ENCODE measurements at regions of chr14 and their contacts with region 1.

Region 1: GRCh38 chr14:21092273-21093011 is 6.0 kb downstream of the ZNF219 start:
- DNase-seq: no peak
- H3K4me3 ChIP-seq: no peak overlapping the region
- CTCF ChIP-seq: peak; percentile 100

Region 2: DNA sequence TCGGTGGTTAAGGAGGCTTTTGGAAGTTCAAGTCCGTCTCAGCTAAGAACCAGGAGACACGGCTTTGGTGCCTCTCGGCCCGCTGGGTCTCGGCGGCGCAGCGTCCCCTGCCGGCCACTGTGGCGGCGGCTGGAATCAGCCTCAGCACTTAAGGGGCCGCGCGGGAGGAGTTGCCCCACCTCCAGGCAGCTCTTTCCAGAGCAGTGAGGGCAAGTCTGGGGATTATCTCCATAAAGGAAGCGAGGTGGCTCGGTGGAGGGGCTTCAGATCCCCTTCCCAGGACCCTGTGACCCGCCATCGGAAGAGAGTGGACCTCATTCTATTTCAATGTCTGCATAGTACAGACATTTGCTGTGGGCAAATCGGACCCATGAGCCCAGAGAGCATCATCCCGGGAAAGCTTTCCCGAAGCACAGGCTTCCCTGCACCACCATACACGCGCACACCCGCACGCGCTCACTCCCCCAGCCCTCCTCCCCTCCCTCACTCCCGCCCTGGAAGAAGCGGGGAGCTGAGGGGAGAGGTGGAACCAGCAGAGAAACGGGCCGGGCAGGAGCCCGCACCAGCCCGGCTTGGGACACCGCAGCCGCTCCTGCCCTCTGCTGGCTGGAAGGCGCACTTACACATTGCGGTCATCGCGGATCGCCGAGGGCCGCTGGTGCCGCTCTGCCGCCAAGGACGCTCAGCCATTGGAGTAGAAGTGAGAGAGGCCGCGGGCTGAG is 121.3 kb before region 1 on chr14:
- CTCF ChIA-PET with region 1: interaction called, 14 read pairs
- POLR2A ChIA-PET with region 1: no interaction called
- DNase-seq: no peak
- H3K4me3 ChIP-seq: peak overlapping the region; percentile 73
- CTCF ChIP-seq: peak; percentile 98

Region 3: GRCh38 chr14:21003788-21004346 is 88.6 kb before region 1 on chr14:
- CTCF ChIA-PET with region 1: interaction called, 15 read pairs
- POLR2A ChIA-PET with region 1: no interaction called
- DNase-seq: no peak
- H3K4me3 ChIP-seq: no peak overlapping the region
- CTCF ChIP-seq: no peak

Region 4: DNA sequence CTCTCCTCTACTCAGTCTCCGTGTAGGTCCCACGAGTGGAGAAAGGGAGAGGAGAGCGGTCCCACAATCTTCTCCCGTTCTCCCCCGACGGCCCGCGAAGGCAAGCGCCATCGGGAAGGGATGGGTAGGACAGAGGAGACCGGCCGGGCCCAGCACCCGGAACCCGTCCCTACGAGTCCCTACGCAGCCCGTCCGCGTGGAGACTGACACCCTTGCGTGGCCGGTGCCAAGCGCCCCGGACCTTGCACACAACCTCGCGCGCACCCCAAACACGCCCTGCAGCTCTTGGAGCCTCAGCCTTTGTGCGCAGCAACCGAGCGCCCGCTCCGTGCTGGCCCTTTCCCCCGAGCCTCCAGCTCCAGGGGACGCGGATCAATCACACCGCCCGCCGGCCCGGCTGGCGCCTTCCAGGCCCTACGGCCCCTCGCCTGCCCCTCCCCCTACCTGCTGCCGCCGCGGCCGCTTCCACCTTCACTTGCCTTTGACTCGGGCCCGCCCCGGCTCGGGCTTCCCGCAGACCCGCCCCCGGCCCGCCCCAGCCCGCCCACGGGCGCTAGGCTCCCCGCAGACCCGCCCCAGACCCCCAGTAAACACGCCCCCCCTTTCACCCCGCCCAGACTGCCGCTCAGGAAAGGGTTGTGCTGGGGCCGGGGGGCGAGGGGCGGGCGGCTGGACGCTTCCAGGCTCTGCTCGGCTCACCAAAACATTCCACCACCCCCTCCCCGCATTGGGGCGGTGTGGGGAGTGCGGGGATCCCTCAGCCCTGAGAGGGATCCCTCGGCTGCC is 67.7 kb before region 1 on chr14 and contains the start of gene NDRG2:
- CTCF ChIA-PET with region 1: interaction called, 325 read pairs
- POLR2A ChIA-PET with region 1: no interaction called
- DNase-seq: no peak
- H3K4me3 ChIP-seq: peak within 1 kb of the TSS; percentile 43
- CTCF ChIP-seq: no peak

Region 5: DNA sequence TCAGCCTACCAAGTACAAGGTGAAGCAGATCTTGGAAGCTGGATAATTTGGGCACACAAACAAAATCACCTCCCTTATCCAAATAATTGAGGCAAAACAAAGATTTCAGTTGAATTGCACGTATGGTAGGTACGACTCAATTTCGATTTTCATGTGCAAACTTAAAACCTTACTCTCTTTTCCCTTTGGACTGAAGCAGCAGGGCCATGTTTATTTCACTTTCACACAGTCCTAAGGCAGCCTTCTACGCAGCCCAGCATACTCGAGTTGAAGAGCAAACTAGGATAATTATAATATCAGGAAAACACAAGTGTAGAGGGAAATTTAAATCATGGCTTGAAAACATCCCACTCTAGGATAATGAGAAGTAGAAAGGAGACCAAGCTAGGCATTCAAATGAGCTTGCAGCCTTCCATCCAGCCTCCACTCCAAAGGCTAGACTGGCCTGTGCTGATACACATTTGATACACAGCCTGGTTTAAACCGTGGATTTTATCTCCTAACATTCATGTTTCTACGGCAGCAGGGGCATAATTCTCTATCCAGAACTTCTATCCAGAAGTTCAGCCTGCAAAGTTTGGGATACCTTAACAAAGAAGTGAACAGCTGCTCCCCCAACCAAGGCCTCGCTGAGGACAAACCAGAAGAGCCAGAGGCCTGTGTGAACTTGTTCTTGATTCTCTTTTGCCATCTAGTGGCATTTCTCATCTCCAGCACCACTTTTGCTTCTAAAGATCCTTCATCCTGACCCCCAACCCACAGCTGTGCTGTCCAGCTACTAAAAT is 52.7 kb before region 1 on chr14:
- CTCF ChIA-PET with region 1: interaction called, 34 read pairs
- POLR2A ChIA-PET with region 1: interaction called, 3 read pairs
- DNase-seq: peak; percentile 29
- H3K4me3 ChIP-seq: no peak overlapping the region
- CTCF ChIP-seq: peak; percentile 56

Region 6: DNA sequence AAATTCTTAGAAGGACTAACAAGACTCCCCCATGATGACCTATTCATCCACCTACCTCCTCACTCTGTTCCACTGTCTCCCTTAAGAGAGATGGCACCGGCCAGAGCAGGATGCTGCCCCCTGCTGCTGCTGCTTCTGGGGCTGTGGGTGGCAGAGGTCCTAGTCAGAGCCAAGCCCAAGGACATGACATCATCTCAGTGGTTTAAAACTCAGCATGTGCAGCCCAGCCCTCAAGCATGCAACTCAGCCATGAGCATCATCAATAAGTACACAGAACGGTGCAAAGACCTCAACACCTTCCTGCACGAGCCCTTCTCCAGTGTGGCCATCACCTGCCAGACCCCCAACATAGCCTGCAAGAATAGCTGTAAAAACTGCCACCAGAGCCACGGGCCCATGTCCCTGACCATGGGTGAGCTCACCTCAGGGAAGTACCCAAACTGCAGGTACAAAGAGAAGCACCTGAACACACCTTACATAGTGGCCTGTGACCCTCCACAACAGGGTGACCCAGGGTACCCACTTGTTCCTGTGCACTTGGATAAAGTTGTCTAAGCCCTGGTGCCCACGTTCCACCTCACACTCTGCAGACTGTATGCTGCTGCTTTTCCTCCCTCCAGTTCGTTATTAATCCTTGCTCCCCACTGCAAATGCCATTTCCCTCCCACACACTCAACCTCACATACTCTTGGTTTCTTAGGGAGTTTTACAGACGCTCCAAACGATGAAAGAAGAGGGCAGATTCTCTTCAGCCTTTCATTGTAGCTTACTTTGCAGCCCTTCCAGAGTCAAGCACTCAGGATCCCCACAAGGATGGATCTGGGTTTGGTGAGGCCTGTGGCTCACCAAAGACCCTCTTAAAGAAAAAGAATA is 34.4 kb before region 1 on chr14 and contains the start of gene RNASE8:
- CTCF ChIA-PET with region 1: interaction called, 36 read pairs
- POLR2A ChIA-PET with region 1: no interaction called
- DNase-seq: no peak
- H3K4me3 ChIP-seq: no peak within 1 kb of the TSS
- CTCF ChIP-seq: peak; percentile 36

Region 7: GRCh38 chr14:21071225-21072030 is 21.0 kb before region 1 on chr14:
- CTCF ChIA-PET with region 1: interaction called, 220 read pairs
- POLR2A ChIA-PET with region 1: interaction called, 42 read pairs
- DNase-seq: no peak
- H3K4me3 ChIP-seq: peak overlapping the region; percentile 81
- CTCF ChIP-seq: no peak

Region 8: DNA sequence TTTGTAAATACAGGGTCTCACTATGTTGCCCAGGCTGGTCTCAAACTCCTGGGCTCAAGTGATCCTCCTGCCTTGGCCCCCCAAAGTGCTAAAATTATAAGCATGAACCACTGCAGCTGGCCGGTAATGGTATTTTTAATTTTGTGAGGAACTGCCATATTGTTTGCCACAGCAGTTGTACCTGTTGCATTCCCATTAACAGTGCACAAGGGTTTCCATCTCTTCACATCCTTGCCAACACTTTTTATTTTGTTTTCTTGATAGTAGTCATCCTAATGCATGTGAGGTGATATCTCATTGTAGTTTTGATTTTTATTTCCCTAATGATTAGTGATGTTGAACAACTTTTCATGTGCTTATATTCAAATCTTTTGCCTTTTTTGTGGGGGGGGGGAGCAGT is 49.9 kb after region 1 on chr14:
- CTCF ChIA-PET with region 1: no interaction called
- POLR2A ChIA-PET with region 1: no interaction called
- DNase-seq: no peak
- H3K4me3 ChIP-seq: no peak overlapping the region
- CTCF ChIP-seq: no peak

Measured in AG04449 (cell line).